Activated CD4-positive, alpha-beta T cell treated with anti-CD3 and anti-CD28 coated beads, Interleukin-2, amount 10 ng/mL, durations not matched to agents 24 days and 14 days (primary cell): ENCODE measurements at regions of chr17 and their contacts with region 1.

Region 1: GRCh38 chr17:5019475-5019956 is 15.7 kb downstream of the SLC52A1 start:
- DNase-seq: peak; percentile 73
- H3K4me3 Mint-ChIP-seq: no peak overlapping the region
- H3K27ac Mint-ChIP-seq: peak overlapping the region; percentile 61
- H3K4me1 Mint-ChIP-seq: peaks cover 9% of the 10 kb centered on the region
- H3K27me3 Mint-ChIP-seq: no peaks in the 10 kb centered on the region

Region 2: DNA sequence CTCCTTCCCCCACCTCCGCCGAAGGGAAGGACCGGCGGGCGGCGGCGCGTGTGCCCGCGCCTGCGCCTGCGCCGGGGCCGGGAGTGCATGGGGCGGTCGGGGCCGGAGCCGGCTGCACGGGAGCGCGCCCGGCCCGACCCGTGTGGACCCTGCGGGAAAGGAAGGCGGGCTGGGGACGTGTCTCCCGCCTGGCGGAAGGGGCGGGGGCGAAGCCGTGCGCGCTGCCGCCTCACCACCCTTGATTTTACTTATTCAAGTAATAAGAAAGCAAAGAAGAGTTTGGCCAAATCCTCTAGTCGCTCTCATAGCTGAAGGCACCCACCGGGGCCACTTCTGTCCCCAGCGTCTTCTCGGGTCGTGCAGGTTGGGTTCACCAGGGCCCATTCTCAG is 70.6 kb before region 1 on chr17:
- intact Hi-C with region 1: loop called (anchors 2 kb)
- DNase-seq: peak; percentile 94
- H3K4me3 Mint-ChIP-seq: peak overlapping the region; percentile 95
- H3K27ac Mint-ChIP-seq: peak overlapping the region; percentile 99
- H3K4me1 Mint-ChIP-seq: peaks cover 44% of the 10 kb centered on the region
- H3K27me3 Mint-ChIP-seq: no peaks in the 10 kb centered on the region

Region 3: DNA sequence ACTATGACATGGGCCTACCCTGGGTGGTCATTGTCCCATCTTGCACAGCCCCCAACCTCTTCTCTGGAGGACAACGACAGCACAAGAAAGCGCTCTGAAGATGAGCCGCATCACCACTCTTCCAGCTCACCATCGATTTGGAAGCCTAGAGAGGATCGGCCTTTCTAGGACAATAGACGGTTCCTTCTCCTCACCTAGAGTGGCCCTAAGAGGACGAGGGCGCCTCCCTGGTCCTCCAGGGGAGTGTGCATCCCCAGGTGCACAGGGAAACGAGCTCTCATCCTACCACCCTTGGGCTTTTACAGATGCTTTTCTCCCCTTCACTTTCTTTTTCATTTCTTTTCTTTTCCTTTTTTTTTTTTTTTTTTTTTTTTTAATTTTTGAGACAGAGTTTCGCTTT is 36.0 kb after region 1 on chr17:
- intact Hi-C with region 1: loop called (anchors 5 kb)
- DNase-seq: no peak
- H3K4me3 Mint-ChIP-seq: no peak overlapping the region
- H3K27ac Mint-ChIP-seq: no peak overlapping the region
- H3K4me1 Mint-ChIP-seq: no peaks in the 10 kb centered on the region
- H3K27me3 Mint-ChIP-seq: no peaks in the 10 kb centered on the region

Region 4: DNA sequence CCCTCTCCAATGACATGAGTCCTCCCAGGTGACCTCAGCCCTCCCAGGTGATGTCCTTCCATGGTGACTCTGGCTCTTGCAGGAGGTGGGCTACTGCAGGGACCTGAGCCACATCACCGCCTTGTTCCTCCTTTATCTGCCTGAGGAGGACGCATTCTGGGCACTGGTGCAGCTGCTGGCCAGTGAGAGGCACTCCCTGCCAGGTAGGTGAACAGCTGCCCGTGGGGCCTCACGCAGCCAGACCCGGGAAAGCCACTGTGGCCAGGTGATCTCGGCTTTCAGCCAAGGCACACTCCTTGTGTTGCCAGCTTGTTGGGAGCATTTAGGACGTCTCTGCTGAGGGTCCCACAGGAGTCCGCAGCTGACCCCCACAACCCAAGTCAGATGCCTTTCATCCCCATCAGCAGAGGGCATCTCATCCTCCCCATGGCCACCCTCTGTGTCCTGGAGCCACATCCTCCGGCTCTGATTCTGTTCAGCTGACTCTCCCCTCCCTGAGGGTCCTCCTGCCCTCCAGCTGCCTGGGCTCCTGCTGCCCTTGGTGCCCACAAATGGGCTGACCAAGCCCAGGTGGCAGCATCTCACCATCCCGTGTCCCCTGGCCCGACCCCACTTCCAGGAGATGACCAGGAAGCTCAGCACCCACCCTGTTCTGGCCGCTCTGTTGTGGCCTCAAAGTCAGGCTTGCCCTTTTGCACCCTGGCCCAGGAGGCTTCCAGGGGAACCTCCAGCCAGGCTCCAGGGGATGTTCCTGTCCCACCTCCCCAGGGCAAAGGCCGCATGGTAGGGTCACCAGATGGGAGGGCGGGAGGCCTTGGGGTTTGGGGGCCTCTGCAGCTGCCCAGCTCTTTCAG is 116.4 kb after region 1 on chr17:
- intact Hi-C with region 1: no loop called
- DNase-seq: peak; percentile 47
- H3K4me3 Mint-ChIP-seq: no peak overlapping the region
- H3K27ac Mint-ChIP-seq: no peak overlapping the region
- H3K4me1 Mint-ChIP-seq: no peaks in the 10 kb centered on the region
- H3K27me3 Mint-ChIP-seq: no peaks in the 10 kb centered on the region

Region 5: GRCh38 chr17:5155495-5155894 is 136.0 kb after region 1 on chr17:
- intact Hi-C with region 1: no loop called
- DNase-seq: no peak
- H3K4me3 Mint-ChIP-seq: no peak overlapping the region
- H3K27ac Mint-ChIP-seq: no peak overlapping the region
- H3K4me1 Mint-ChIP-seq: no peaks in the 10 kb centered on the region
- H3K27me3 Mint-ChIP-seq: peaks cover 13% of the 10 kb centered on the region

Region 6: GRCh38 chr17:5373112-5373511 is 353.6 kb after region 1 on chr17:
- intact Hi-C with region 1: no loop called
- DNase-seq: no peak
- H3K4me3 Mint-ChIP-seq: no peak overlapping the region
- H3K27ac Mint-ChIP-seq: no peak overlapping the region
- H3K4me1 Mint-ChIP-seq: no peaks in the 10 kb centered on the region
- H3K27me3 Mint-ChIP-seq: no peaks in the 10 kb centered on the region